Right ventricle myocardium inferior (tissue), 1 donor: ENCODE measurements at regions of chr1 and their contacts with region 1.

Region 1: GRCh38 chr1:169106095-169106920 is at the start of gene ATP1B1:
- DNase-seq: peak; percentile 94
- ATAC-seq: peak; percentile 88
- total RNA-seq, gene ATP1B1: 335 TPM

Region 2: GRCh38 chr1:168637350-168637991 is 468.8 kb before region 1 on chr1:
- intact Hi-C with region 1: loop called (anchors 1 kb)
- DNase-seq: no peak
- ATAC-seq: no peak

Region 3: DNA sequence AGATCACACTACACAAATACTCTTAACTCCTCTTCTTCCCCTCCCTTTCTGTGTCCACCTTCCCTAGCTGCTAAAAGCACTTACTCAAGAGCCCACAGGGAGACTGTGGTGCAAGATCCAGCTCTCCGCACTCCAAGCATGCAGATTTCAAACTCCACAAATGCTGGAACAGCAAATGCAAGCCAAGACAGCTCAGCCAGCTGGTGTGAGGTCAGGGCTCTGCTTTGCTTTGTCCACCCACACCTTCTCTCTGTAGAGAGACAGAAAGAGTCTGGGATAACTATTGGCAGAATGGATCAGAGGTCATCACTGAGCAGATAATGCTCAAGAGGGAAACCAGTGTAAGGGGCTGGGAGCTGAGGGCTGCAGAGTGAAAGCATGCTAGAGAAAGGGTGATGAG is 332.1 kb before region 1 on chr1:
- intact Hi-C with region 1: loop called (anchors 5 kb)
- DNase-seq: peak; percentile 71
- ATAC-seq: peak; percentile 98

Region 4: GRCh38 chr1:168945870-168946269 is 160.4 kb before region 1 on chr1:
- intact Hi-C with region 1: loop called (anchors 1 kb)
- DNase-seq: peak; percentile 64
- ATAC-seq: peak; percentile 96

Region 5: DNA sequence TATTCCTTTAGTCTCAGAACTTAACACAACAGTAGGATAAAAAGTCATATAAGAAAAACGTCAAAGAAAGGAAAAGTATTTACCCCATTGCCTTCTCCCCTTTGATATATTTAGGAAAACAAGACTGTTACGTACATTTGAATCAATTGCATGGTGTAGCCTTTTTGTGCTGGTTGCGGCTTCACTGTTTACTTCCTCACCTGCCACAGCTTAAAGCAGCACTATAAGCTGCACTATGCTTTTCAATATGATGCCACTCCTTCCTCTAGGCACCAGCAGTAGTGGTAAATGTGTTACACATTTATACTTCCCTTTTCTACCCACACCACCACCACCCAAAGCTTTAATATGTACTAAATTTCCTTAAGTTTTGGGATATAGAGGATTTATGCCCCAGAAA is 111.3 kb after region 1 on chr1:
- intact Hi-C with region 1: no loop called
- DNase-seq: no peak
- ATAC-seq: no peak

Region 6: DNA sequence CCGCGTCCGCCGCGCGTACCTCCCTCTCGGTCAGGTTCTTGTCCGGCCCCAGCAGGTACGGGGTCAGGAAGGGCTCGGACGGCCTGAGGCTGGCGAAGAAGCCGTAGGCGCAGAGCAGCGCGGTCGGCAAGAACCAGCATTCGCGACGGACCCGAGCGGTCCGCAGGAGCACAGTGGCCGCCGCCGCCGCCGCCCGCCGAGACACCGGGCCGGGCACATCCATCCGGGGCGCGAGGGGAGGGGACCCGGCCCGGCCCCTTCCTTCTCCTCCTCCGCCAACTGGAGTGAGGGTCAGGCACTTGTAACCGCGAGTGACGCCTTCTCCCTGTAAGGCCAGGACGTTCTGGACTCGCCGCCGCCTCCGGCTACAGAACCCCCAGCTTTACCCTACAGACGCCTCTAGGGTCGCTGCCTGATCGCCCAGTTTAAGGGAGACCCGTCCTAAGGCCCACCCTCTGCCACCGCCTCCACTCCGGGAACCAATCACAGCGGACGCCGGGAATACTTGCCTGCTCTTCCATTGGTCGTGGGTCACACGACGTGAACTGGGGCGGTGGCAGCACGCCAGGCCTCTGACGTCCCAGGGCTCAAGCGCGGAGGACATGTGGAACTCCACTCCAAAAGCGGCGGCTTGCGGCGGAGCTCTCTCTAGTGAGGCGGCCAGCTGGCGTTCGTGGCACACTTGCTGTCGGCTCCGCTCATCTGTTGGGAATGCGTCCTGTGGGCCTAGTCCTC is 379.4 kb after region 1 on chr1 and contains the start of gene SLC19A2:
- intact Hi-C with region 1: loop called (anchors 10 kb)
- DNase-seq: peak; percentile 100
- ATAC-seq: peak; percentile 98
- total RNA-seq, gene SLC19A2: 16.5 TPM